Activated CD4-positive, alpha-beta T cell treated with anti-CD3 and anti-CD28 coated beads for 36 hours (primary cell): ENCODE measurements at regions of chr12 and their contacts with region 1.

Region 1: DNA sequence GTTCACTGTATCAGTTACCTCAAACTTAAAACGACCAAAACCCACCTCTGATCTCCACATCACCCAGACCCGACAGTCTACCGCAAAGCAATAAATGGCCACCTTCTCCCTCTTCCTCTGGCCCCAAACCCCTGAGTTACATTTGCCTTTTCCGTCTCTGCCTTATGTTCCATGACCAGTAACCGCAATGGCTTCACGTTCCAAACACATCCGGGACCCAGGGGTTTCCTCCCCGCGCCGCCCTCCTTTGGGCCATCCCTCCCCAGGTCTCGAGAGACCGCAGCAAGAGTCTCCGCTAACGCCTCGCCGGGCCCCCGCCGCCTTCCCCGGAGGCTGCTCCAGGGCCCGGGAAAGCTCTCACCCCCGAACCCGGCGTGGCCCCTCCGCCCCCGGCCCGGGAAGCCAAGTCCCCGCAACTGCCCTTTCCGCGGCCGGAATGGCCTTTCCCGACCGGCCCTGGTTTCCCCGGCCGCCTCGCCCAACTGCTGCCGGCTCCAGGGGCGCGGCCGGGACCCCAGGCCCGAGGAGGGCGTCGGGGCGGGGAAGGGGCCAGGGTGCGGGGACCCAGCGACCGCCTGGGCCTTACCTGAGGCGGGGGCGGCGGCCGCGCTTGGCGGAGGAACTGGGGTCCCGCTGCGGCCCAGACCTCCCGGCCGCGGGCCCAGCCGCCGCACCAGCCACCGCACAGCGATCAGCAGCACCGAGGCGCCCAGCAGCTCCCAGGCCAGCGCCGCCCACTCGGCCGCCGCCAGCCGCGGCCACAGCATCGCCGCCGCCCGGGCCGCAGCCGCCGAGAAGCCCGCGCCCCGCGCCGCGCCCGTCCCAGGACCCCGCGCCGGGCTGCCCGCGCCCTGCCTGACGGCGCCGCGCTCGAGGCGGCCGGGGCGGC is at the start of gene ANKLE2:
- DNase-seq: peak; percentile 84
- ATAC-seq: peak; percentile 41
- H3K4me3 Mint-ChIP-seq: peak within 1 kb of the TSS; percentile 90
- H3K27ac Mint-ChIP-seq: peak within 1 kb of the TSS; percentile 98
- H3K4me1 Mint-ChIP-seq: peaks cover 33% of the 10 kb centered on the region
- H3K27me3 Mint-ChIP-seq: no peaks in the 10 kb centered on the region
- total RNA-seq, gene ANKLE2: 110 to 111 TPM

Region 2: DNA sequence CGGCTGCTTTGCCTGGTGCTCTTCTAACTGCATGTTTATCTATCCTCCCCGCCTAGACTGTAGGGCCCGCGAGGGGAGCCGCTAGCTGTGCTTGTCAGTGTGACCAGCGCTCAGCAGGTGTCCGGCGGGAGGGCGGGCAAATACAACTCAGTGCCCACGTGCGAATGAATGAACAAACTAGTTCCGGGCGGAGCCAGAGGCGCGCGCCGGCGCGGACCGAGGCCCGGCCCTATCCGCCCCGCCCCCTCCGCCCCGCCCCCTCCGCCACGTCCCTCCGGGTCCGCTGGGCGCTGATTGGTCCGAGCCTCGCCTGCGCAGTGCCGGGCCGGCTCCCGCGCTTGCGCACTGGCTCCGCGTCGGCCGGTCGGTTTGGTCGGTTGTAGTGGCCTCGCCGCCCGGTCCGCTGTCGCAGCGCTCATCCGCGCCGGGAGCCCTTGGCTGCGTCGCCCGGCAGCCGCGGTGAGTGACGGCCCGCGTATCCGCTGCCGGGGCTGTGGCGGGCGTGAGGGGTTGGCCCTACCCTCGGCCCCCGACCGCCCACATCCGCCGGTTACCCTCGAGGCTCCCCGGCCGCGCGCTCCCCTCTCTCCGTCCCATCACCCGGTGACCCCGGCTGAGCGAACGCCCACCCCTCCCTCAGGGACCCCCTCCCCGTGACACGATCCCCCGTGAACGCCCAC is 677.2 kb before region 1 on chr12:
- CTCF ChIA-PET with region 1: no interaction called
- POLR2A ChIA-PET with region 1: no interaction called
- intact Hi-C with region 1: loop called in 1 of 2 experiments (anchors 5 kb)
- DNase-seq: peak; percentile 94
- ATAC-seq: peak; percentile 95
- H3K4me3 Mint-ChIP-seq: peak overlapping the region; percentile 86
- H3K27ac Mint-ChIP-seq: peak overlapping the region; percentile 91
- H3K4me1 Mint-ChIP-seq: peaks cover 23% of the 10 kb centered on the region
- H3K27me3 Mint-ChIP-seq: no peaks in the 10 kb centered on the region

Region 3: GRCh38 chr12:132710422-132711168 is 50.7 kb before region 1 on chr12 and contains the start of gene PGAM5:
- CTCF ChIA-PET with region 1: no interaction called
- POLR2A ChIA-PET with region 1: interaction called, 3 read pairs
- intact Hi-C with region 1: loop called in 1 of 2 experiments (anchors 1 kb)
- DNase-seq: peak; percentile 92
- ATAC-seq: peak; percentile 92
- H3K4me3 Mint-ChIP-seq: peak within 1 kb of the TSS; percentile 75
- H3K27ac Mint-ChIP-seq: peak within 1 kb of the TSS; percentile 66
- H3K4me1 Mint-ChIP-seq: peaks cover 24% of the 10 kb centered on the region
- H3K27me3 Mint-ChIP-seq: no peaks in the 10 kb centered on the region
- total RNA-seq, gene PGAM5: 65.6 to 74.0 TPM

Region 4: GRCh38 chr12:132956011-132956788 is 194.9 kb after region 1 on chr12 and contains the start of gene ZNF605:
- CTCF ChIA-PET with region 1: no interaction called
- POLR2A ChIA-PET with region 1: no interaction called
- intact Hi-C with region 1: loop called in 1 of 2 experiments (anchors 2 kb)
- DNase-seq: peak; percentile 93
- ATAC-seq: peak; percentile 91
- H3K4me3 Mint-ChIP-seq: peak within 1 kb of the TSS; percentile 93
- H3K27ac Mint-ChIP-seq: peak within 1 kb of the TSS; percentile 88
- H3K4me1 Mint-ChIP-seq: peaks cover 22% of the 10 kb centered on the region
- H3K27me3 Mint-ChIP-seq: no peaks in the 10 kb centered on the region
- total RNA-seq, gene ZNF605: 8.0 to 8.3 TPM

Region 5: DNA sequence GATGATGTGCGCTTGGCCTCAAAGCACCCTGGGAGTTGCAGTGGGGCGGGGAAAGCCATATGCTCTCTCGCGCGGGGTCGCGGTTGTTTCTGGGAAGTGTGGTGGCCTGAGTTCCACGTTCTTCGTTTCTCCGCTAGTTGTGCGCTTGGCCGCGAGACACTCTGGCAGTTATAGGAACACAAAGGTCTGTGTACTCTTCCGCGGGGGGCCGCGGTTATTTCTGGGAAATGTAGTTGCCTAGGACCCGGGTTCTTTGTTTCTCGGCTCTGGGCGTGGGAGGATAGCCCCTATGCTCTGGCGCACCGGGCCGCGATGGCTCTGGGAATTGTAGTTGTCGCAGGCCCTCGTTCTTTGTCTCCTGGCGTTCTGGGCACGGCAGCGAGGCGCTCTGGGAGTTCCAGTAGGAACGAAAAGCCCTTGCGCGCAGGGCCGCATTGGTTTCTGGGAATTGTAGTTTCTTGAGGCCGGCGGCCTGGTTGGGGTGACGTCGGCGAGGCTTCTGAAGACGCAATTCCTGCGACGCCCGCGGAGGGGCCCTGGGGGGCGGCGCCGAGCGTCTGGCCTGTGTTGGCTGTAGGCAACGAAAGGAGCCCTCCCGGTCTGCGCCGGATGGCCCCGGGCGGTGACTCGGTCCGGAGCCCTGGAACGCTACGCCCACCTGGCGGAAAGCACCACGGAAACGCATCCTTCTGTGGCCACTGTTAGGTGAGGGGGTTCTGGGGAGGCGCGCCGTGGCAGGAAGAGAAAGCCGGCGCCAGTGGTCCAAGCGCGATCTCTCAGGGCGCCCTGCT is 319.3 kb after region 1 on chr12 and contains the start of gene ZNF140:
- CTCF ChIA-PET with region 1: no interaction called
- POLR2A ChIA-PET with region 1: interaction called, 3 read pairs
- intact Hi-C with region 1: loop called in 1 of 2 experiments (anchors 1 kb)
- DNase-seq: peak; percentile 97
- ATAC-seq: peak; percentile 64
- H3K4me3 Mint-ChIP-seq: no peak within 1 kb of the TSS
- H3K27ac Mint-ChIP-seq: no peak within 1 kb of the TSS
- H3K4me1 Mint-ChIP-seq: peaks cover 13% of the 10 kb centered on the region
- H3K27me3 Mint-ChIP-seq: no peaks in the 10 kb centered on the region
- total RNA-seq, gene ZNF140: 13.3 to 14.3 TPM